Naive thymus-derived CD4-positive, alpha-beta T cell (primary cell): ENCODE measurements at regions of chr2 and their contacts with region 1.

Region 1: GRCh38 chr2:26088032-26088643 is 54.3 kb downstream of the RAB10 start:
- DNase-seq: peak in 7 of 9 donors; percentile 5 to 40 (median 28)
- ATAC-seq: peak; percentile 75
- H3K4me3 ChIP-seq: no peak overlapping the region
- H3K4me3 Mint-ChIP-seq: peak overlapping the region in 1 of 10 donors; percentile 0
- H3K27ac ChIP-seq: no peak overlapping the region
- H3K27ac Mint-ChIP-seq: peak overlapping the region in 1 of 9 donors; percentile 0
- H3K4me1 ChIP-seq: peaks cover 4 to 8% of the 10 kb centered on the region in 2 donors
- H3K4me1 Mint-ChIP-seq: peaks cover 34 to 52% (median 49%) of the 10 kb centered on the region in 7 donors
- H3K27me3 ChIP-seq: no peaks in the 10 kb centered on the region
- H3K27me3 Mint-ChIP-seq: no peaks in the 10 kb centered on the region

Region 2: DNA sequence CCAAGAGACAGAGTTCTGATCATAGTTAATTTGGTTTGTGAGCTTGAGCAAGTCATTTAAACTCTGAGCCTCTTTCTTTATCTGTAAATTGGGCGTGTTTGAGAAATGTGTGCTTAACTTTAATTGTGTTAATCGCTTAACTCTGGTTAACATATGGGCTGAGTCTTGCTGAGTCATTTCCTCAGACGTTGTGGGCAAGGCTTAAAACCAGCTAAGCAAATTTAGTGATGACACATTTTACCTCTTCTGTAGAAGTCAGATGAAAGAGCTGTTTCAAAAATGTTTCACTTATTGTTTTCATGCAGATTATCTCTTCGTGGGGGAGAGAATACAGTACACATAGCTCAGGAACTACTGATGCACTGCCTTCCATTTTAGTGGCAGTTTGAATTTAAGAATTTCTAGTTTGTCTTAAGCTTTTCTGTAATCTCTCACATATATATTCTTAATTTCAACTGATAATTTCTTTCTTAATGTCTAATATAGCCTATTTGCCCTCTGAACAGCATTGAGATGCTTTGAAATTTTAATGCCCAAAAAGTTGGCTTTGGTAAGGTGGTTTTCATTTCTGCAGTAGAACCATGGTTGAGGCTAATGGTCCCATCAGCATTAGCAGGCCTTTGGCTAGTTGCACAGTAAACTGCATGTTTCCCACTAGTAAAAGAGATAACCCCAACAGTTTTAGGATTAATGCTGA is 19.4 kb before region 1 on chr2:
- CTCF ChIA-PET with region 1: interaction called, 3 read pairs
- POLR2A ChIA-PET with region 1: no interaction called
- intact Hi-C with region 1: loop called in 1 of 2 experiments (anchors 2 kb)
- DNase-seq: peak in 7 of 9 donors; percentile 12 to 49 (median 24)
- ATAC-seq: peak; percentile 89
- H3K4me3 ChIP-seq: no peak overlapping the region
- H3K4me3 Mint-ChIP-seq: peak overlapping the region in 5 of 10 donors; percentile 19 to 62 (median 47)
- H3K27ac ChIP-seq: no peak overlapping the region
- H3K27ac Mint-ChIP-seq: peak overlapping the region in 4 of 9 donors; percentile 4 to 62 (median 32)
- H3K4me1 ChIP-seq: peaks cover 7 to 25% of the 10 kb centered on the region in 2 donors
- H3K4me1 Mint-ChIP-seq: peaks cover 46 to 72% (median 54%) of the 10 kb centered on the region in 7 donors
- H3K27me3 ChIP-seq: no peaks in the 10 kb centered on the region
- H3K27me3 Mint-ChIP-seq: no peaks in the 10 kb centered on the region

Region 3: DNA sequence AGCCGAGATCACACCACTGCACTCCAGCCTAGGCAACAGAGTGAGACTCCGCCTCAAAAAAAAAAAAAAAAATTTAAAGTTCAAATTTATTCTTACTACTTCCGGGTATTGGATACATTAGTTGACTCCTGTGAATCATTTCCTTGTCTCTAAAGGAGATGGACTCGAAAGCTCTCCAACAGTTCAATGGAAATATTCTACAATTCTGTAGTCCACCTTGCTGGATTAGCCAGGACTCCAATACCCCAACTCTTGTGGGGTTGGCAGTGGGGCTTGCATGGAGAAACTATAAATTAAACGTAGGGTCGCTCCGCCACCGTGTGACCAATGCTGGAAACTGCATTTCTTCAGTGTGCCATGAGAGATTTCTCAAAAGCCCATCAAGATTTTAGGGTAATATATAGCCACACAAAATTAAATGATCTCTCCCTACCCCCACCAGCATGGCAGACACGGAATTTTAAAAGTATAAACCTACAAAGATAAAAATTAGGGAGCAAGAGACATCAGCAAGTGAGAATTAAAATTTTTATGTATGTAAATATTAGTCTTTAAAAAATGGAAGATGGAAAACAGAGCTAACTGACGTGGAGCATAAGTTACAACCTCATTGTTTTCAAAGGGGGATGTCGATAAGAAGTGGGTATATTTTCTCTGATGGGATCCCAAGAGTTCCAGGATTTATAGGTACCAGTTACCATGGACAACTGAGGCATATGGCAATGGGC is 57.0 kb after region 1 on chr2:
- CTCF ChIA-PET with region 1: interaction called, 3 read pairs
- POLR2A ChIA-PET with region 1: no interaction called
- intact Hi-C with region 1: loop called (anchors 1 kb)
- DNase-seq: peak; percentile 22 to 59 (median 47)
- ATAC-seq: peak; percentile 73
- H3K4me3 ChIP-seq: no peak overlapping the region
- H3K4me3 Mint-ChIP-seq: no peak overlapping the region
- H3K27ac ChIP-seq: no peak overlapping the region
- H3K27ac Mint-ChIP-seq: peak overlapping the region in 3 of 9 donors; percentile 4 to 21 (median 7)
- H3K4me1 ChIP-seq: no peaks in the 10 kb centered on the region
- H3K4me1 Mint-ChIP-seq: peaks cover 0 to 5% (median 0%) of the 10 kb centered on the region in 7 donors
- H3K27me3 ChIP-seq: no peaks in the 10 kb centered on the region
- H3K27me3 Mint-ChIP-seq: peaks cover 6 to 10% (median 8%) of the 10 kb centered on the region in 5 donors

Region 4: DNA sequence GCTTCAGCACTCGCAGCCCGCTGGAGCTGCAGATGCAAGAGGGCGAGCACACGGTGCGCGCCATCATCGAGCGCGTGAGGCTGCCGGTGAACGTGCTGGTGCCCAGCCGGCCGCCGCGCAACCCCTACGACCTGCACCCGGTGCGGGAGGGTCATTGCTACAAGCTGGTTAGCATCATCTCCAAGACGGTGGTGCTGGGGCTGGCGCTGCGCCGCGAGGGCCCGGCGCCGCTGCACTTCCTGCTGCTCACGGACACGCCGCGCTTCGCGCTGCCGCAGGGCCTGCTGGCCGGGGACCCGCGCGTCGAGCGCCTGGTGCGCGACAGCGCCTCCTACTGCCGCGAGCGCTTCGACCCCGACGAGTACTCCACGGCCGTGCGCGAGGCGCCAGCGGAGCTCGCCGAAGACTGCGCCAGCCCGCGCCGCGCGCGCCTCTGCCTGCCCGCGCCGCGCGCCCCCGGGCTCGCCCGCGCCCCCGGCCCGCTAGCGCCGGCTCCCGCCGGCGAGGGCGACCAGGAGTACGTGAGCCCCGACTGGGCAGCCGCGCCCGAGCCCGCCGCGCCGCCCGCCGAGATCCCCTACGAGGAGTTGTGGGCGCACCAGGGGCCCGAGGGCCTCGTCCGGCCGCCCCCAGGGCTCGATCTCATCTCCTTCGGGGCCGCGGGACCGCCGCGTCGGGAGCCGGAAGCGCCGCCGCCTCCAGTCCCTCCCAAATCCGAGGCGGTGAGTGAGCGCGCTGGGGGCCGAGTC is 96.6 kb after region 1 on chr2:
- CTCF ChIA-PET with region 1: no interaction called
- POLR2A ChIA-PET with region 1: no interaction called
- intact Hi-C with region 1: loop called in 1 of 2 experiments (anchors 1 kb)
- DNase-seq: peak; percentile 82 to 91 (median 88)
- ATAC-seq: peak; percentile 98
- H3K4me3 ChIP-seq: peak overlapping the region; percentile 68
- H3K4me3 Mint-ChIP-seq: peak overlapping the region; percentile 79 to 91 (median 85)
- H3K27ac ChIP-seq: peak overlapping the region; percentile 71
- H3K27ac Mint-ChIP-seq: peak overlapping the region in 7 of 9 donors; percentile 25 to 90 (median 67)
- H3K4me1 ChIP-seq: peaks cover 5 to 8% of the 10 kb centered on the region in 2 donors
- H3K4me1 Mint-ChIP-seq: peaks cover 6 to 30% (median 23%) of the 10 kb centered on the region in 7 donors
- H3K27me3 ChIP-seq: no peaks in the 10 kb centered on the region
- H3K27me3 Mint-ChIP-seq: peaks cover 11 to 23% (median 15%) of the 10 kb centered on the region in 5 donors

Region 5: DNA sequence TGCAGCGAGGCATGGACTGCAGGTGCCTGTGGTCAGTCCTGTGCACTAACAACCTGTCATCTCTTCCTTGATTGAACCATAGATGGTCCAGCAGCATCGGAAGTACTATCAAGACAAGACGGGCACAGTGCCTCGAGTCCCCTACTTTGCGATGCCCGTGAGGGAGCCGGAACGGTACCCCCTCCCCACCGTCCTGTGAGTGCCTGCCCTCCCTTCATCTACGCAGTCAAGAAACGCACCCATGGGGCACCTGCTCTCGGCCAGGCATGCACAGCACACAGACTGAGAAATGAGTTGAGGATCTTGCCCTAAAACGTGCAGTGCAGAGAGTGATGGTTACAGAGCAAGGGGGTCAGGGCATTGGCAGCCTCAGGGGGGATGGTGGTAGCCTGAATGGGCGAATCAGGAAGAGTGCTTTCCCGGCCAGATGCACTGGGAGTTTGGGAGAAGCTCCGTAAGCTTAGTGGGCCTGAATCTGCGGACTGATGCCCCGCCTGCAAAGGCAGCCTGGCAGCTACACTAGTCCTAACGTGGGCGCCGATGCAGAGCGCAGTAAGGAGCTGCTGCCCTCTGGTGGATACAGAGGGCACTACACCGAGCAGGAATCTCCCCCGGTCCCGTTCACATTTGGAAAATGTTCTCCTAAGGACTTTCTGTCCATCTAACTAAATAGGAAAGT is 489.4 kb after region 1 on chr2:
- CTCF ChIA-PET with region 1: interaction called, 3 read pairs
- POLR2A ChIA-PET with region 1: no interaction called
- intact Hi-C with region 1: loop called in 1 of 2 experiments (anchors 2 kb)
- DNase-seq: peak; percentile 17 to 66 (median 52)
- ATAC-seq: peak; percentile 88
- H3K4me3 ChIP-seq: no peak overlapping the region
- H3K4me3 Mint-ChIP-seq: no peak overlapping the region
- H3K27ac ChIP-seq: no peak overlapping the region
- H3K27ac Mint-ChIP-seq: no peak overlapping the region
- H3K4me1 ChIP-seq: no peaks in the 10 kb centered on the region
- H3K4me1 Mint-ChIP-seq: peaks cover 0 to 5% (median 0%) of the 10 kb centered on the region in 7 donors
- H3K27me3 ChIP-seq: peaks cover 0 to 5% of the 10 kb centered on the region in 2 donors
- H3K27me3 Mint-ChIP-seq: peaks cover 5 to 13% (median 10%) of the 10 kb centered on the region in 5 donors